Endothelial cell of umbilical vein (primary cell): ENCODE measurements at regions of chr15 and their contacts with region 1.

Region 1: GRCh38 chr15:101723874-101724674 is at the start of gene TARS3:
- DNase-seq: peak; percentile 90
- H3K4me3 ChIP-seq: peak within 1 kb of the TSS; percentile 65 to 91 (median 77)
- H3K27ac ChIP-seq: peak within 1 kb of the TSS; percentile 58
- H3K4me1 ChIP-seq: peaks cover 5% of the 10 kb centered on the region
- H3K27me3 ChIP-seq: no peaks in the 10 kb centered on the region
- CTCF ChIP-seq: no peak
- POLR2A ChIP-seq: peak; percentile 86
- total RNA-seq, gene TARS3: 7.7 and 8.2 TPM in 2 replicates

Region 2: GRCh38 chr15:101294731-101295606 is 429.1 kb before region 1 on chr15 and contains the start of gene SNRPA1:
- CTCF ChIA-PET with region 1: no interaction called
- POLR2A ChIA-PET with region 1: no interaction called
- dilution Hi-C with region 1: no loop called
- intact Hi-C with region 1: loop called (anchors 1 kb)
- DNase-seq: peak; percentile 95
- H3K4me3 ChIP-seq: peak within 1 kb of the TSS; percentile 77 to 94 (median 80)
- H3K27ac ChIP-seq: peak within 1 kb of the TSS; percentile 70
- H3K4me1 ChIP-seq: peaks cover 14% of the 10 kb centered on the region
- H3K27me3 ChIP-seq: no peaks in the 10 kb centered on the region
- CTCF ChIP-seq: no peak
- POLR2A ChIP-seq: peak; percentile 53
- total RNA-seq, gene SNRPA1: 80.8 and 82.7 TPM in 2 replicates

Region 3: GRCh38 chr15:101528108-101528916 is 195.8 kb before region 1 on chr15:
- CTCF ChIA-PET with region 1: no interaction called
- POLR2A ChIA-PET with region 1: no interaction called
- dilution Hi-C with region 1: no loop called
- intact Hi-C with region 1: no loop called
- DNase-seq: no peak
- H3K4me3 ChIP-seq: no peak overlapping the region
- H3K27ac ChIP-seq: no peak overlapping the region
- H3K4me1 ChIP-seq: no peaks in the 10 kb centered on the region
- H3K27me3 ChIP-seq: no peaks in the 10 kb centered on the region
- CTCF ChIP-seq: no peak
- POLR2A ChIP-seq: no peak

Region 4: GRCh38 chr15:101652098-101652782 is 71.8 kb before region 1 on chr15 and contains the start of gene TM2D3:
- CTCF ChIA-PET with region 1: no interaction called
- POLR2A ChIA-PET with region 1: no interaction called
- dilution Hi-C with region 1: no loop called
- intact Hi-C with region 1: loop called (anchors 1 kb)
- DNase-seq: peak; percentile 93
- H3K4me3 ChIP-seq: peak within 1 kb of the TSS; percentile 19 to 78 (median 60)
- H3K27ac ChIP-seq: peak within 1 kb of the TSS; percentile 74
- H3K4me1 ChIP-seq: peaks cover 19% of the 10 kb centered on the region
- H3K27me3 ChIP-seq: no peaks in the 10 kb centered on the region
- CTCF ChIP-seq: peak; percentile 81 to 83
- POLR2A ChIP-seq: peak; percentile 91
- total RNA-seq, gene TM2D3: 34.3 and 36.7 TPM in 2 replicates

Region 5: DNA sequence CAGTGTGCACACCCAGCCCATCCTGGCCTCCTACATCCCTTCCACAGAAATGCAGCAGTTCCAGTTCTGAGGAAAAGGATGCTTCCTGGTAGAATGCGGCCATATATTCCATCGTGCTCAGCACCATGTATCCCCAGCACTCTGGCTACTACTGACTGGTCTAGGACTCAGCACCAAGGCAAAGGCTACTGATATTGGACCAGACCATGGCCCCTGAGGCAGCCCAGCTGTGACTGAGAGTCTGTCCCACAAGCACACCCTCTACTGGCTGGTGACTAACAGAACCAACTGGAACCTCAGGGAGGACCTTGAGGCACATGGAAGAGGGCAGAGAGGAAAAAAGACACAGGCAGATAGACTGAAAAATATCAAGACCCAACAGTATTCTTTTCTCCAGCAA is 29.8 kb before region 1 on chr15:
- CTCF ChIA-PET with region 1: no interaction called
- POLR2A ChIA-PET with region 1: no interaction called
- dilution Hi-C with region 1: no loop called
- intact Hi-C with region 1: loop called (anchors 2 kb)
- DNase-seq: no peak
- H3K4me3 ChIP-seq: no peak overlapping the region
- H3K27ac ChIP-seq: no peak overlapping the region
- H3K4me1 ChIP-seq: no peaks in the 10 kb centered on the region
- H3K27me3 ChIP-seq: no peaks in the 10 kb centered on the region
- CTCF ChIP-seq: no peak
- POLR2A ChIP-seq: no peak

Region 6: GRCh38 chr15:101702077-101702476 is 22.0 kb before region 1 on chr15:
- CTCF ChIA-PET with region 1: interaction called, 5 read pairs
- POLR2A ChIA-PET with region 1: no interaction called
- dilution Hi-C with region 1: no loop called
- intact Hi-C with region 1: loop called (anchors 1 kb)
- DNase-seq: peak; percentile 42
- H3K4me3 ChIP-seq: no peak overlapping the region
- H3K27ac ChIP-seq: peak overlapping the region; percentile 13
- H3K4me1 ChIP-seq: peaks cover 16% of the 10 kb centered on the region
- H3K27me3 ChIP-seq: no peaks in the 10 kb centered on the region
- CTCF ChIP-seq: no peak
- POLR2A ChIP-seq: no peak